ENCODE measurements at regions of chr11 and their contacts with region 1.

Region 1: DNA sequence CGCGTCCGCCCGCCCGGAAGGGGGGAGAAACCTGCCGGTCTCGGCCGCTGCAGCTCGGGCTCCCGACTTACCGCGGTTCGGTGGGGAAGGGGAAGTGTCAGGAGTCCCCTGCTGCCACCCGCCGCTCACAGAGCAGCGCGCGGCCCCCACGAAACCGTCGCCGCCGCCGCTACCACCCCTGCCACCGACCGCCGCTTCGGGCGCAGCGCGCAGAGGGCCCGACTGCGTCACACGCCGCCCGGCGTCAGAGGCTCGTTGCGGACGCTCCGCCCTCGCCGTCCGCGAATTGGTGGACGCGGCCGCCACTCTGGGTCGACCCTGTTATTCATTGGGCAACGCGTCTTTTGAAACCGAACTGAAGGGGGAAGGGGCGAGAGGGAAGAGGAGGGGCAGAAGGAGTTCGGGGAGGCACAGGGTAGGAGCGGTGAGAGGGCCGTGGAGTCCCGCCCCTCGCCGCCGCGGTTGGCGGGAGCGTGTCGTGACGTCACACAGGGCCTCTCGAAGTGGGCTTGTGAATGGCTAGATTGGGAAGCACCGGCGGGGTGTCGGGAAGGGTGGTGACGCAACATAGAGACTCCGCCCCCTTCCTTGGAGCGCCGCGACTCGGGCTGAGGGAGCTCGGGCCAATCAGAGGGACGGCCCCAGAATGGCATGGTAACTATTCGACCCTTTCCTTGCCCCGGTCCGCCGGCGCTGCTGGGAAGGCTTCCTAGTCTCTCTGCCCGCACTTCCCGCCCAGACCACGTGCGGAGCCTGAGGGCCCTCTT is at the start of gene NUP98:
- DNase-seq: peak; percentile 100
- ATAC-seq: peak; percentile 98
- H3K4me3 Mint-ChIP-seq: peak within 1 kb of the TSS; percentile 91
- H3K27ac Mint-ChIP-seq: peak within 1 kb of the TSS; percentile 97
- H3K4me1 Mint-ChIP-seq: peaks cover 48% of the 10 kb centered on the region
- H3K27me3 Mint-ChIP-seq: no peaks in the 10 kb centered on the region
- total RNA-seq, gene NUP98: 106 to 108 TPM

Region 2: DNA sequence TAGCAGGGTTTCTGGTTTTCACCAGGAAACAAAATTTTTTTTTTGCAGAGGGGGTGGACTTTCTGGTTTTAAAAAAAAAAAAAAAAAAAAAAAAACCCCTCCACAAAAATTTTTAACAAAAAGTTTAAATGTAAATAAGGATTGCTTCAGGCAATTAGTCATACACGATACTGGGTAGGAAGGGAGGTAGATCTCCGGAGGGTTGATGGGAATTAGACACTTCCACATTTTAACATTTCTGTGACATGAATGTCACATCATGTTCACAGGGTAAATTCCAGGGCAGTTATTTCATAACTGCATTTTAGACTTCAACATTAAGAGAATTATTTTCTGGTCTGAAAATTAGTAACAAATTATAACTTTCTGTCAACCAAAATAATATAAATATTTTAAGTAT is 16.1 kb before region 1 on chr11:
- CTCF ChIA-PET with region 1: interaction called, 5 read pairs
- POLR2A ChIA-PET with region 1: interaction called, 31 read pairs
- DNase-seq: no peak
- ATAC-seq: no peak
- H3K4me3 Mint-ChIP-seq: no peak overlapping the region
- H3K27ac Mint-ChIP-seq: peak overlapping the region; percentile 10
- H3K4me1 Mint-ChIP-seq: peaks cover 46% of the 10 kb centered on the region
- H3K27me3 Mint-ChIP-seq: no peaks in the 10 kb centered on the region

Region 3: GRCh38 chr11:3786781-3787428 is 10.6 kb before region 1 on chr11:
- CTCF ChIA-PET with region 1: interaction called, 5 read pairs
- POLR2A ChIA-PET with region 1: interaction called, 31 read pairs
- DNase-seq: no peak
- ATAC-seq: no peak
- H3K4me3 Mint-ChIP-seq: no peak overlapping the region
- H3K27ac Mint-ChIP-seq: peak overlapping the region; percentile 9
- H3K4me1 Mint-ChIP-seq: peaks cover 63% of the 10 kb centered on the region
- H3K27me3 Mint-ChIP-seq: no peaks in the 10 kb centered on the region